ENCODE measurements at regions of chr3 and their contacts with region 1.

Region 1: DNA sequence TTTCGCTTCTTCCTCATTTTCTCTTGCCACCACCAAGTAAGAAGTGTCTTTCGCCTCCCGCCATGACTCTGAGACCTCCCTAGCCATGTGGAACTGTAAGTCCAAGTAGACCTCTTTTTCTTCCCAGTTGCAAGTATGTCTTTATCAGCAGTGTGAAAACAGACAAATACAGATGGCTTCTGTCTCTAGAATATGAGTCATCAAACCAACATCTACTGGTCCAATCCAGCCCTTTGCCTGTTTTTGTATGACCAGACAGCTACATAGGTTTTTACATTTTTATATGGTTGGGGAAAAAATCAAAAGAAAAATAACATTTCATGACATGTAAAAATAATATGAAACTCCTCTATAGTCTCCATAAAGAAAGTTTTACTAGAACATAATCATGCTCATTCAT is 118.7 kb upstream of the PTPRG start:
- DNase-seq: no peak
- H3K4me3 Mint-ChIP-seq: no peak overlapping the region
- H3K27ac Mint-ChIP-seq: no peak overlapping the region
- H3K4me1 Mint-ChIP-seq: no peaks in the 10 kb centered on the region
- H3K27me3 Mint-ChIP-seq: peaks cover 7% of the 10 kb centered on the region

Region 2: GRCh38 chr3:61227799-61228198 is 214.9 kb before region 1 on chr3:
- intact Hi-C with region 1: no loop called
- DNase-seq: no peak
- H3K4me3 Mint-ChIP-seq: no peak overlapping the region
- H3K27ac Mint-ChIP-seq: no peak overlapping the region
- H3K4me1 Mint-ChIP-seq: no peaks in the 10 kb centered on the region
- H3K27me3 Mint-ChIP-seq: no peaks in the 10 kb centered on the region

Region 3: DNA sequence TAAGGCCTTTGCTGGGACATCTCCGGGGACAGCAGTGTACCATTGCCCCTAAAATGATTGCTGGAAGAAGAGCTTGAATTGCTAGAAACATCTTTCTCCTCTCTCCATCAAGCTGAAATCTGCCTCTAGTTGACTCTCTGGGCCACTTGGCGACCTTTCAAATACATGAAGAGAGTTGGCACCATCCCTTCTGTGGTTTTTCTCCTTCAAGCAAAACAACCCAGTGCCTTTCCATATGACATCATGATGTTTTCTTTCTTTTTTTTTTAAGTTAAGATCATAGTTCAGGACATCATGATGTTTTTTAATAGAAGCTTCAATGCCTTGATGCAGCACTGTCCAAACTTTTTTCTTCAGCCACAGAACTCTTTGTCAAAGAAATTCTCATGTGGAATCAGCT is 25.3 kb before region 1 on chr3:
- intact Hi-C with region 1: no loop called
- DNase-seq: no peak
- H3K4me3 Mint-ChIP-seq: no peak overlapping the region
- H3K27ac Mint-ChIP-seq: no peak overlapping the region
- H3K4me1 Mint-ChIP-seq: peaks cover 10% of the 10 kb centered on the region
- H3K27me3 Mint-ChIP-seq: peaks cover 2% of the 10 kb centered on the region

Region 4: GRCh38 chr3:61505197-61505596 is 62.5 kb after region 1 on chr3:
- intact Hi-C with region 1: no loop called
- DNase-seq: no peak
- H3K4me3 Mint-ChIP-seq: no peak overlapping the region
- H3K27ac Mint-ChIP-seq: no peak overlapping the region
- H3K4me1 Mint-ChIP-seq: peaks cover 4% of the 10 kb centered on the region
- H3K27me3 Mint-ChIP-seq: peaks cover 9% of the 10 kb centered on the region

Region 5: GRCh38 chr3:61520966-61521628 is 78.4 kb after region 1 on chr3:
- intact Hi-C with region 1: loop called (anchors 5 kb)
- DNase-seq: peak; percentile 84
- H3K4me3 Mint-ChIP-seq: peak overlapping the region; percentile 48
- H3K27ac Mint-ChIP-seq: peak overlapping the region; percentile 80
- H3K4me1 Mint-ChIP-seq: peaks cover 37% of the 10 kb centered on the region
- H3K27me3 Mint-ChIP-seq: no peaks in the 10 kb centered on the region

Measured in activated CD4-positive, alpha-beta T cell treated with anti-CD3 and anti-CD28 coated beads, Interleukin-2, amount 10 ng/mL, durations not matched to agents 24 days and 14 days (primary cell).